Activated CD8-positive, alpha-beta T cell treated with anti-CD3 and anti-CD28 coated beads for 36 hours (primary cell): ENCODE measurements at regions of chr2 and their contacts with region 1.

Region 1: GRCh38 chr2:160085662-160086061 is 23.2 kb upstream of the PLA2R1 start:
- DNase-seq: no peak
- ATAC-seq: no peak
- H3K4me3 Mint-ChIP-seq: no peak overlapping the region
- H3K27ac Mint-ChIP-seq: no peak overlapping the region
- H3K4me1 Mint-ChIP-seq: no peaks in the 10 kb centered on the region
- H3K27me3 Mint-ChIP-seq: peaks cover 2% of the 10 kb centered on the region
- CTCF ChIP-seq: peak; percentile 43

Region 2: DNA sequence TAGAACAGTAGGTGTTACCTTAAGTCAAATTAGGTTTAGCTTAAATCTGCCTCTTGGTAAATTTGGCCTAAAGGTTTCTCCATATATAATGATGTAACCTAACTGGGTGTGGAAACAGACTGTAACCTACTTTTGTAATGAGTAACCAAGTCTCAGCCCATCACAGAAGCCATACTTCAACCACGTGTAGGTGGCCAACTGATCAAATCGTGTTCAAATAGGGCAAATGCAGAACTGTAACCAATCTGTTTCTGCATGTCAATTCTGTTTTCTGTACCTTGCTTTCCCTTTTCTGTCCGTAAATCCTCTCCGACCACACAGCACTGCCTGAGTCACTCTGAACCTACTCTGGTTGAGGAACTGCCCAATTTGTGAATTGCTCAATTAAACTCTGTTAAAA is 10.7 kb after region 1 on chr2:
- CTCF ChIA-PET with region 1: interaction called, 22 read pairs
- POLR2A ChIA-PET with region 1: no interaction called
- intact Hi-C with region 1: no loop called
- DNase-seq: peak; percentile 58
- ATAC-seq: peak; percentile 78
- H3K4me3 Mint-ChIP-seq: no peak overlapping the region
- H3K27ac Mint-ChIP-seq: no peak overlapping the region
- H3K4me1 Mint-ChIP-seq: peaks cover 4% of the 10 kb centered on the region
- H3K27me3 Mint-ChIP-seq: peaks cover 5% of the 10 kb centered on the region
- CTCF ChIP-seq: no peak